ENCODE measurements at regions of chr22 and their contacts with region 1.

Region 1: GRCh38 chr22:45775569-45776312 is 104.1 kb downstream of the ATXN10 start:
- DNase-seq: peak; percentile 72
- ATAC-seq: peak; percentile 87
- H3K4me3 ChIP-seq: no peak overlapping the region
- H3K27ac ChIP-seq: peak overlapping the region; percentile 100
- H3K4me1 ChIP-seq: peaks cover 62% of the 10 kb centered on the region
- H3K27me3 ChIP-seq: no peaks in the 10 kb centered on the region
- CTCF ChIP-seq: no peak
- EP300 ChIP-seq: peak; percentile 94 to 96
- POLR2A ChIP-seq: peak; percentile 53
- RAD21 ChIP-seq: no peak

Region 2: GRCh38 chr22:45397806-45398205 is 377.9 kb before region 1 on chr22:
- CTCF ChIA-PET with region 1: no interaction called
- POLR2A ChIA-PET with region 1: no interaction called
- RAD21 ChIA-PET with region 1: no interaction called
- SMC1A ChIA-PET with region 1: no interaction called
- in situ Hi-C with region 1: no loop called
- intact Hi-C with region 1: no loop called
- DNase-seq: no peak
- ATAC-seq: peak; percentile 38; the same call in 1 of the 3 replicates
- H3K4me3 ChIP-seq: no peak overlapping the region
- H3K27ac ChIP-seq: no peak overlapping the region
- H3K4me1 ChIP-seq: no peaks in the 10 kb centered on the region
- H3K27me3 ChIP-seq: no peaks in the 10 kb centered on the region
- CTCF ChIP-seq: peak in 2 of 3 experiments; percentile 6 to 26; a peak in 1 of 6 replicates
- EP300 ChIP-seq: no peak
- POLR2A ChIP-seq: no peak
- RAD21 ChIP-seq: 0 out of 2 replicates have a peak, but pooled peaks have one; percentile 16

Region 3: GRCh38 chr22:45671768-45672563 is 103.8 kb before region 1 on chr22 and contains the start of gene ATXN10:
- CTCF ChIA-PET with region 1: no interaction called
- POLR2A ChIA-PET with region 1: no interaction called
- RAD21 ChIA-PET with region 1: no interaction called
- SMC1A ChIA-PET with region 1: interaction called, 3 read pairs
- in situ Hi-C with region 1: no loop called
- intact Hi-C with region 1: loop called (anchors 5 kb)
- DNase-seq: no peak
- ATAC-seq: peak; percentile 80
- H3K4me3 ChIP-seq: peak within 1 kb of the TSS; percentile 96
- H3K27ac ChIP-seq: peak within 1 kb of the TSS; percentile 92
- H3K4me1 ChIP-seq: peaks cover 13% of the 10 kb centered on the region; the same call in 1 of the 2 replicates
- H3K27me3 ChIP-seq: no peaks in the 10 kb centered on the region
- CTCF ChIP-seq: no peak
- EP300 ChIP-seq: no peak
- POLR2A ChIP-seq: peak; percentile 77
- RAD21 ChIP-seq: no peak
- polyA plus RNA-seq, gene ATXN10: 29.2 to 68.3 TPM